ENCODE measurements at regions of chr11 and their contacts with region 1.

Region 1: GRCh38 chr11:6737872-6738466 is 33.8 kb downstream of the OR2AG2 start:
- DNase-seq: peak; percentile 64
- H3K4me3 ChIP-seq: no peak overlapping the region
- H3K27ac ChIP-seq: no peak overlapping the region
- H3K4me1 ChIP-seq: peaks cover 12% of the 10 kb centered on the region
- H3K27me3 ChIP-seq: peaks cover 0 to 3% of the 10 kb centered on the region in 2 experiments
- CTCF ChIP-seq: peak; percentile 53 to 66
- POLR2A ChIP-seq: no peak

Region 2: DNA sequence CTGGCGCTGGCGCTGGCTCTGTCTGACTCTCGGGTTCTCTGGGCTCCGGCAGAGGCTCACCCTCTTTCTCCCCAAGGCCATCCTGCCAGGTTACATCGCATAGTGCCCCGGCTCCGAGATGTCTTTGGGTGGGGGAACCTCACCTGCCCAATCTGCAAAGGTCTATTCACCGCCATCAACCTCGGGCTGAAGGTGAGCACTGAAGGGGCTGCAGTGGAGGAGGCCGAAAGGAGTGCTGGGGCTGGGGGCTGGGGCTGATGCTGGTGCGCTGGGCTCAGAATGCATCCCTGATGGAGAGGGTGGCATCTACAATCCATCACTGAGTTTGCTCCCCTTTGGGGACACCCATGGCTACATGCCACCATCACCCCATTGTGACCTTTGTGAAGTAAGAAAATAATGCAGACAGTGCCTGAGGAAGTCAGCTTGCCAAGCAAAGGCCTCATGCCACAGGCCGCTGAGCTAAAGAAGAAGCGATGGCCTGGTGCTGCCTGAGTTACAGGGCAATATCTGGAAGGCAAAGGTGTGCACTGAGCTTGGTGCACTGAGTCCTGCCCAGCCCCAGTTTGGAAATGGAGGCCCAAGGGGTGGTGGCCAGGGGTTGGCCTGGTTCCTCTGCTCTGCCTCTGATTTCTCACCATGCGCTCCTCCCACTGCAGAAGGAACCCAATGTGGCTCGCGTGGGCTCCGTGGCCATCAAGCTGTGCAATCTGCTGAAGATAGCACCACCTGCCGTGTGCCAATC is 347.1 kb before region 1 on chr11:
- CTCF ChIA-PET with region 1: no interaction called
- POLR2A ChIA-PET with region 1: no interaction called
- dilution Hi-C with region 1: no loop called
- intact Hi-C with region 1: no loop called
- DNase-seq: no peak
- H3K4me3 ChIP-seq: peak overlapping the region; percentile 71 to 82 (median 72)
- H3K27ac ChIP-seq: peak overlapping the region; percentile 73
- H3K4me1 ChIP-seq: peaks cover 33% of the 10 kb centered on the region
- H3K27me3 ChIP-seq: no peaks in the 10 kb centered on the region
- CTCF ChIP-seq: no peak
- POLR2A ChIP-seq: no peak

Region 3: DNA sequence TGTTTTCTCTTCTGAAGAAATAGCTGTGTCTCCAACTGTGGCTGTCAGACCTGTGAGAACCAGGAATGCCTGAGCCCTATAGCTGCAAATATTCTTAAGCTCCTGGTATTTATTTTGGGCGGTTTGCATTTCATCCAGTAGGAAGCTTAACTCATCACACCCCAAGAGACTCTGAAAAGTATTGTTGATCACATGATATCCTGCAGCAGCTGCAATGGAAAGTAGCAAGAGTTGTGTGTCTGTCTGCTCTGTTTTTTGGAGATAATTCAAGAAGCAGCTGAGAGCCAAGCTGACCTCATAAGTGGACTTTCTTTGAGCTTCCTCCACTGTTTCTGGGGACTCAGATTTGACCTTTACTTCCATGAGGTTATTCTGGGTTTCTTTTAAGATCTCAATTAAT is 18.4 kb before region 1 on chr11:
- CTCF ChIA-PET with region 1: interaction called, 12 read pairs
- POLR2A ChIA-PET with region 1: no interaction called
- dilution Hi-C with region 1: no loop called
- intact Hi-C with region 1: no loop called
- DNase-seq: no peak
- H3K4me3 ChIP-seq: no peak overlapping the region
- H3K27ac ChIP-seq: no peak overlapping the region
- H3K4me1 ChIP-seq: peaks cover 15% of the 10 kb centered on the region
- H3K27me3 ChIP-seq: peaks cover 3 to 10% of the 10 kb centered on the region in 2 experiments
- CTCF ChIP-seq: no peak
- POLR2A ChIP-seq: no peak

Region 4: GRCh38 chr11:6855971-6856541 is 118.1 kb after region 1 on chr11:
- CTCF ChIA-PET with region 1: no interaction called
- POLR2A ChIA-PET with region 1: no interaction called
- dilution Hi-C with region 1: no loop called
- intact Hi-C with region 1: no loop called
- DNase-seq: no peak
- H3K4me3 ChIP-seq: no peak overlapping the region
- H3K27ac ChIP-seq: no peak overlapping the region
- H3K4me1 ChIP-seq: no peaks in the 10 kb centered on the region
- H3K27me3 ChIP-seq: no peaks in the 10 kb centered on the region
- CTCF ChIP-seq: no peak
- POLR2A ChIP-seq: no peak

Region 5: GRCh38 chr11:7239877-7240276 is 501.9 kb after region 1 on chr11:
- CTCF ChIA-PET with region 1: no interaction called
- POLR2A ChIA-PET with region 1: no interaction called
- dilution Hi-C with region 1: no loop called
- intact Hi-C with region 1: no loop called
- DNase-seq: no peak
- H3K4me3 ChIP-seq: no peak overlapping the region
- H3K27ac ChIP-seq: no peak overlapping the region
- H3K4me1 ChIP-seq: no peaks in the 10 kb centered on the region
- H3K27me3 ChIP-seq: peaks cover 0 to 2% of the 10 kb centered on the region in 2 experiments
- CTCF ChIP-seq: no peak
- POLR2A ChIP-seq: no peak